ENCODE measurements at regions of chrX and their contacts with region 1.

Region 1: GRCh38 chrX:41022579-41022978 is 62.7 kb upstream of the USP9X start:
- DNase-seq: no peak

Region 2: GRCh38 chrX:40878766-40879165 is 143.8 kb before region 1 on chrX:
- intact Hi-C with region 1: no loop called
- DNase-seq: no peak

Region 3: DNA sequence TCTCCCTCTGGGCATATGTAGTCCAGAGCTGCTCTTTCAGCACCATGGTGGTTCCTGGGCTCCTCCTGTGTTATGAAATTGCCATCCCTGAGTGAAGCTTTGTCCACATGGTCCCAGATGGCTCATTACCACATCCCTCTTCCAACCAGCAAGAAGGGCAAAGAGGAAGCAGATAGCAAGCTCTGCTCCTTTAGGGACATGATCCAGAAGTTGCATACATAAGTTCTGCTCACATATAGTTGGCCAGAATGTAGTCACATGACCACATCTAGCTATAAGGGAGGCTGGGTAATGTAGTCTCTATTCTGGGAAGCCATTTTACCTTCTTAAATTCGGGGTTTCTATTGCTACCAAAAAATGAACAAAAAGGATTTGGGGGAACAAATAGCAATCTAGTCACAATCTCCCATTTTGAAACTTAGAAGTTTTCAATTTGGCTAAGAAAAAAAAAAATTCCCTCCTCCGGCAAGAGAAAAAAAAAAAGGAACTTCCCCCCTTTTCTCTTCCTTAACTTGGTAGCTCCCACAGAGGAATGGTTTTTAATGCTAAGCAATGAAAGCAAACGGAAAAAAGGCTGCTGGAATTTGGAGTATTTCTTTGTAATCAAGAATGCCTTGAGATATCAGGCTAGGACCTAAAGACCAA is 25.6 kb before region 1 on chrX:
- intact Hi-C with region 1: no loop called
- DNase-seq: no peak

Region 4: DNA sequence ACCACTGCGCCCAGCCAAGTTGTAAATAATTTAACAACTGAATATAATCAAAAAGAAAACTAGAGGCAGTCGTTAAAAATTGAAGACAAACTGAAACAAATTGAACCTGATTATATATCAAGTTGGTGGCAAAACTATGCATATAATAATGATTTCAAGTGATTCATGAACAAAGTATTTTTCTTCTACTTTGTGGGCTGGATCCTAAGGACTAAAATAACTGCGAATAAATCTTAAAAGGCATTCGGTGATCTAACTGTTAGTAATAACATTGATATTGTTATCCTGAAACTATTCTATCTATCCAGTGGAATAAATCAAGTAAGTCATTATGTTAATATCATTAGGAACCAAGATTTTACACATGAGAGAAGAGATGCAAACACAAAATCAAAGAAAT is 41.4 kb after region 1 on chrX:
- intact Hi-C with region 1: loop called in 1 of 2 experiments (anchors 2 kb)
- DNase-seq: no peak

Measured in posterior vena cava (tissue), 2 donors.